Activated B cell treated with CpG ODN at 0.5 μM for 24 hours (primary cell): ENCODE measurements at regions of chr5 and their contacts with region 1.

Region 1: GRCh38 chr5:36690041-36690961 is 83.9 kb downstream of the SLC1A3 start:
- DNase-seq: peak; percentile 69
- ATAC-seq: peak; percentile 80
- H3K4me3 Mint-ChIP-seq: peak overlapping the region; percentile 94
- H3K27ac Mint-ChIP-seq: peak overlapping the region; percentile 86
- H3K4me1 Mint-ChIP-seq: peaks cover 39% of the 10 kb centered on the region
- H3K27me3 Mint-ChIP-seq: no peaks in the 10 kb centered on the region
- CTCF ChIP-seq: no peak

Region 2: DNA sequence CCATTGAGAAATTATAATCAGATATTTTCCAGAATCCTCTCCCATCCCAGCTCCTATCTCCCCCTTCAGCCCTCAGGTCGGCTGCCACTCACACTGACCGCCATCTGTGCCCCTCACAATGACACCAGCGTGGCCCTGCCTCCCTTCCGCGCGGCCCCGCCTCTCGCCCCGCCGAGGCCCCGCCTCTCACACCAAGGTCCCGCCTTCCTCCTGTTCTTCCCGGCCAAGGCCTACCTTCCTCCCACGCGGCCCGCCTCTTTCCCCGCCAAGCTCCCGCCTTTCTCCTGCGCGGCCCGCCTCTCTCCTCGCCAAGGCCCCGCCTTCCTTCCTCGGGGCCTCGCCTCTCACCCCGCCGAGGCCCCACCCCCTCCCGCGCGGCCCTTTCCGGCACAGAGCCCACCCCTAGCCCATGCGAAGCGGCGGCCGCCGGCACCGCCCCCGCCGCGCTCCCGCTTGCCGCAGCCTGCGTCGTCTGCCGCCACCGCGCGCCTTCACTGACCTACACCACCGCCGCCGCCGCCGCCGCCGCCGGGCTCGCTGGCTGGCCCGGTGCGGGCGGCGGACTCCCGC is 1761.1 kb before region 1 on chr5 and contains the start of gene DNAJC21:
- CTCF ChIA-PET with region 1: no interaction called
- POLR2A ChIA-PET with region 1: no interaction called
- intact Hi-C with region 1: loop called (anchors 5 kb)
- DNase-seq: peak; percentile 98
- ATAC-seq: peak; percentile 88
- H3K4me3 Mint-ChIP-seq: peak within 1 kb of the TSS; percentile 97
- H3K27ac Mint-ChIP-seq: peak within 1 kb of the TSS; percentile 93
- H3K4me1 Mint-ChIP-seq: peaks cover 29% of the 10 kb centered on the region
- H3K27me3 Mint-ChIP-seq: no peaks in the 10 kb centered on the region
- CTCF ChIP-seq: no peak
- total RNA-seq, gene DNAJC21: 44.0 and 48.0 TPM in 2 replicates

Region 3: GRCh38 chr5:36151434-36152323 is 538.6 kb before region 1 on chr5 and contains the starts of genes LMBRD2 and SKP2:
- CTCF ChIA-PET with region 1: interaction called, 3 read pairs
- POLR2A ChIA-PET with region 1: no interaction called
- intact Hi-C with region 1: loop called (anchors 2 kb)
- DNase-seq: peak; percentile 95
- ATAC-seq: peak; percentile 97
- H3K4me3 Mint-ChIP-seq: peak within 1 kb of the TSS; percentile 96
- H3K27ac Mint-ChIP-seq: peak within 1 kb of the TSS; percentile 85
- H3K4me1 Mint-ChIP-seq: peaks cover 40% of the 10 kb centered on the region
- H3K27me3 Mint-ChIP-seq: no peaks in the 10 kb centered on the region
- CTCF ChIP-seq: no peak
- total RNA-seq, gene LMBRD2: 6.4 and 8.9 TPM in 2 replicates
- total RNA-seq, gene SKP2: 18.5 TPM in 2 replicates

Region 4: GRCh38 chr5:36264202-36264760 is 426.0 kb before region 1 on chr5:
- CTCF ChIA-PET with region 1: interaction called, 48 read pairs
- POLR2A ChIA-PET with region 1: no interaction called
- intact Hi-C with region 1: loop called (anchors 1 kb)
- DNase-seq: no peak
- ATAC-seq: no peak
- H3K4me3 Mint-ChIP-seq: no peak overlapping the region
- H3K27ac Mint-ChIP-seq: no peak overlapping the region
- H3K4me1 Mint-ChIP-seq: no peaks in the 10 kb centered on the region
- H3K27me3 Mint-ChIP-seq: peaks cover 5% of the 10 kb centered on the region
- CTCF ChIP-seq: no peak

Region 5: GRCh38 chr5:36606428-36607113 is 83.7 kb before region 1 on chr5 and contains the start of gene SLC1A3:
- CTCF ChIA-PET with region 1: interaction called, 5 read pairs
- POLR2A ChIA-PET with region 1: no interaction called
- intact Hi-C with region 1: loop called (anchors 2 kb)
- DNase-seq: no peak
- ATAC-seq: peak; percentile 79
- H3K4me3 Mint-ChIP-seq: peak within 1 kb of the TSS; percentile 77
- H3K27ac Mint-ChIP-seq: no peak within 1 kb of the TSS
- H3K4me1 Mint-ChIP-seq: peaks cover 16% of the 10 kb centered on the region
- H3K27me3 Mint-ChIP-seq: peaks cover 54% of the 10 kb centered on the region
- CTCF ChIP-seq: no peak
- total RNA-seq, gene SLC1A3: 0.44 and 0.82 TPM in 2 replicates

Region 6: GRCh38 chr5:36728697-36729543 is 38.6 kb after region 1 on chr5:
- CTCF ChIA-PET with region 1: interaction called, 44 read pairs
- POLR2A ChIA-PET with region 1: interaction called, 11 read pairs
- intact Hi-C with region 1: loop called (anchors 1 kb)
- DNase-seq: no peak
- ATAC-seq: no peak
- H3K4me3 Mint-ChIP-seq: no peak overlapping the region
- H3K27ac Mint-ChIP-seq: no peak overlapping the region
- H3K4me1 Mint-ChIP-seq: peaks cover 24% of the 10 kb centered on the region
- H3K27me3 Mint-ChIP-seq: peaks cover 3% of the 10 kb centered on the region
- CTCF ChIP-seq: peak; percentile 66

Region 7: GRCh38 chr5:36965179-36965578 is 274.9 kb after region 1 on chr5:
- CTCF ChIA-PET with region 1: no interaction called
- POLR2A ChIA-PET with region 1: no interaction called
- intact Hi-C with region 1: no loop called
- DNase-seq: no peak
- ATAC-seq: no peak
- H3K4me3 Mint-ChIP-seq: no peak overlapping the region
- H3K27ac Mint-ChIP-seq: no peak overlapping the region
- H3K4me1 Mint-ChIP-seq: no peaks in the 10 kb centered on the region
- H3K27me3 Mint-ChIP-seq: no peaks in the 10 kb centered on the region
- CTCF ChIP-seq: no peak